Psoas muscle (tissue), 8 donors: ENCODE measurements at regions of chr1 and their contacts with region 1.

Region 1: GRCh38 chr1:11012250-11013171 is at the start of gene TARDBP:
- DNase-seq: peak; percentile 90 to 95
- ATAC-seq: peak; percentile 93 to 96 (median 96)
- H3K4me3 ChIP-seq: peak within 1 kb of the TSS; percentile 93
- H3K27ac ChIP-seq: peak within 1 kb of the TSS; percentile 97
- H3K4me1 ChIP-seq: peaks cover 37% of the 10 kb centered on the region
- H3K27me3 ChIP-seq: no peaks in the 10 kb centered on the region
- CTCF ChIP-seq: no peak
- total RNA-seq, gene TARDBP: 91.8 to 132 (median 103) TPM

Region 2: DNA sequence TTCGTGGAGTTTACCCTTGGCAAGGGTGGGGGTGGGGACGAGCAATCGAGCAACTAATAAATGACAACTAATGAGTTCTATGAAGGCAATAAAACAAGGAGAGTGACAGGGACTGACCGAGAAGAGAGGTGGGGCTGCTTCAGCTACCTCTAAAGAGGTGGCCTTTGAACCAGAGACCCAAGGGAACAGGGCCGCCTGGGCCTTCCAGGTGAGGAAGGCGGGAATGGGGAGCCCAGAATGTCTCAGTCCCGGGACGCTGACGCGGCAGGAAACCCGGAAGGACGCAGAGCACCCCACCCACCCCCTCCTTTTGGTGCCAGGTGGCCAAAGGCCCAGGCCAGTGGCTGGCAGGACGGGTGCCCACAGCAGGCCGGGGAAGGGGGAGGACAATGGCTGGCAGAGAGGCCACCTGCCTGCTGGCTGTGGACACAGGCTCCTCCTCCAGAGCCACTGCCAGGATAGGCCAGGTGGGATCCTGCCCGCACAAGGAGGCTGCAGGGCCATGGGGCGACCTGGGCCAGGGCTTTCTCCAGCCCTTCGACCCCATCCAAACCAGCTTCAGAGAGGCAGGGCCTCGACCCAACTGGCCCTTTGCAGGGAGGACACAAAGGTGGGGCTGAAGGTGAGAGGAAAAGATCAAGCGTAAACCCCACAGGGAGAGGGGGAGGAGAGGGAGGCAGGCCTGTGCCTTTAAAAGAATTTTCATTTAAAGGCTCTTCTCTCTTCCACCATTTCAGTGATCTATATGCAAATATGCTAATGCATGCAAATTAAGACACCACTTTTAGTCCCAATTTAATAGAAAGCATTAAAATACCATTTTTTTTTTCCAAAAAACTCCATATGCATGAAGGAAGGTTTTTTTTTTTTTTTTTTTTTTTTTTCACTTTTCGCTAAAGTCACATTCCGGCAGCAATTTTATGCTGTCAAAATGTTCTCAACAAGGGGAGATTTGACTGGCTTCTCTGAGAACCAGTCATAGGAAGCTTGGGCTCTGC is 274.2 kb before region 1 on chr1:
- intact Hi-C with region 1: no loop called
- DNase-seq: no peak
- ATAC-seq: peak; percentile 22 to 36 (median 31)
- H3K4me3 ChIP-seq: no peak overlapping the region
- H3K27ac ChIP-seq: peak overlapping the region; percentile 61
- H3K4me1 ChIP-seq: peaks cover 72% of the 10 kb centered on the region
- H3K27me3 ChIP-seq: no peaks in the 10 kb centered on the region
- CTCF ChIP-seq: no peak

Region 3: DNA sequence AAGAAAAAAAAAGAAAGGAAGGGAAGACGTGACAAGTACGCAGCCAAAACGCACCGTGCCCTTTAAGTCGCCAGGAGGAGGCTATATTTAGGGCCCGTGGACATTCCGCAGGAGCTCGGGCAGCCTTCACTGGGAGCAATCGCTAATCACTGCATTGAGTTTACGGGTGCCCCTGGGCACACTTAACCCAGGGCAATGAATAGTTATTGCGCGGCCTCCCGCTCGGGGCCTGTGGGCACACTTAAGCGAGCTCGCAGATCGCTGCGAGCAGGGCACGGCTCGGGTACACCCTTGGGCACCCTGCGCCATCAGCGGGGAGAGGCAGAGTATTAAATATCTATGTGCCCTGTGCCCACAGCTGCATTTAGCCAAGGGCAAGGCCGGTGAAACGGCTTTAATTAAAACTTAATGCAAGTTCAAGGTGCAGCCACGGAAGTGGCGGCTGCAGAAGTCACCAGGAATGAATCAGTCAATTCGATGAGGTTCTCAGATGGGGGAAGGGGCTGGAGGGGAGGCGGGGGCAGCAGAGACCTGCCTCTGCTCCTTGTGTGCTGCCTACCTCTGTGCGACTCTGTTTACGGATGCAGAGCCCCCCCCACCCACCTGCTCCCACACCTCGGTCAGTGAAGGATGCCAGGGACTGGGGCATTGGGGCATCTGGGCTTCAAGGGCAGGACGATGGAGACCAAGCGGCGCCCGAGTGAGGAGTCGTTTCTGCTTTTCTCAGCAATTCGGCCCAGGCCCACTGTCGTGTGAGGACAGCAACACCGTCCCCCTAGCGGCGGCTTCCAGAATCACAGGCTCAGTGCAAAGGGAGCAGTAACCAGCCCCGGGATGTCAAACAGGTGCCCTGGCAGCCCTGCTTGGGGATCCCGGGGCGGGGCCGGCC is 51.9 kb before region 1 on chr1:
- intact Hi-C with region 1: loop called in 1 of 2 experiments (anchors 10 kb)
- DNase-seq: peak; percentile 84 to 93
- ATAC-seq: peak; percentile 82 to 86 (median 84)
- H3K4me3 ChIP-seq: peak overlapping the region; percentile 54
- H3K27ac ChIP-seq: peak overlapping the region; percentile 91
- H3K4me1 ChIP-seq: peaks cover 30% of the 10 kb centered on the region
- H3K27me3 ChIP-seq: no peaks in the 10 kb centered on the region
- CTCF ChIP-seq: peak; percentile 78

Region 4: DNA sequence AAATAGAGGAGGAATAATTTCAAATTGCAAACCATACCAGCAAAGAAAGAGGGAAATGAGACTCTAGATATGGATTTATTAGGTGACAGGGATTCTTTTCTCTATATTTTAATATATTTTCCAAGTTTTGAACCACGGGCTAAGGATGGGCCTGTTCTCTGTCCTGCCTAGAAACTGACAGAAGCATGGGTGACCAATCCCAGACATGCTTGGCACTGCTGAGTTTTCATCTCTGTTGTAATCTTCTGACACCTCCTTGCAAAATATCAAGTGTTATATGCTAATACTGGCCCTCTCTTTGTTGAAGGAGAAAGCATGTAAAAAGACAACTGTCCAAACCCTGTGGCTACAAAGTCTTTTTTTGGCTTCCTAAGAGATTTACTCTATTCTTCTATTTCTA is 175.9 kb after region 1 on chr1:
- intact Hi-C with region 1: no loop called
- DNase-seq: no peak
- ATAC-seq: peak; percentile 70 to 93 (median 82)
- H3K4me3 ChIP-seq: no peak overlapping the region
- H3K27ac ChIP-seq: no peak overlapping the region
- H3K4me1 ChIP-seq: peaks cover 19% of the 10 kb centered on the region
- H3K27me3 ChIP-seq: no peaks in the 10 kb centered on the region
- CTCF ChIP-seq: no peak

Region 5: GRCh38 chr1:11285883-11286734 is 273.6 kb after region 1 on chr1:
- intact Hi-C with region 1: no loop called
- DNase-seq: no peak
- ATAC-seq: peak in 1 of 4 donors; percentile 30
- H3K4me3 ChIP-seq: no peak overlapping the region
- H3K27ac ChIP-seq: no peak overlapping the region
- H3K4me1 ChIP-seq: peaks cover 32% of the 10 kb centered on the region
- H3K27me3 ChIP-seq: no peaks in the 10 kb centered on the region
- CTCF ChIP-seq: peak; percentile 26